H1 (cell line): ENCODE measurements at regions of chr5 and their contacts with region 1.

Region 1: GRCh38 chr5:135999406-136000139 is 29.2 kb upstream of the TGFBI start:
- DNase-seq: no peak
- H3K4me3 ChIP-seq: no peak overlapping the region
- H3K27ac ChIP-seq: no peak overlapping the region
- H3K4me1 ChIP-seq: 0 out of 7 replicates have a peak, but pooled peaks cover 0 to 4% (median 0%) of the 10 kb centered on the region in 4 experiments
- H3K27me3 ChIP-seq: no peaks in the 10 kb centered on the region; a peak in 1 of 7 replicates
- CTCF ChIP-seq: no peak
- EP300 ChIP-seq: no peak
- POLR2A ChIP-seq: no peak
- RAD21 ChIP-seq: no peak

Region 2: GRCh38 chr5:135986891-135987401 is 12.6 kb before region 1 on chr5:
- CTCF ChIA-PET with region 1: interaction called, 30 read pairs
- POLR2A ChIA-PET with region 1: no interaction called
- DNase-seq: no peak
- H3K4me3 ChIP-seq: no peak overlapping the region
- H3K27ac ChIP-seq: no peak overlapping the region
- H3K4me1 ChIP-seq: no peaks in the 10 kb centered on the region
- H3K27me3 ChIP-seq: no peaks in the 10 kb centered on the region
- CTCF ChIP-seq: no peak
- EP300 ChIP-seq: no peak
- POLR2A ChIP-seq: no peak
- RAD21 ChIP-seq: no peak